ENCODE measurements at regions of chr1 and their contacts with region 1.

Region 1: DNA sequence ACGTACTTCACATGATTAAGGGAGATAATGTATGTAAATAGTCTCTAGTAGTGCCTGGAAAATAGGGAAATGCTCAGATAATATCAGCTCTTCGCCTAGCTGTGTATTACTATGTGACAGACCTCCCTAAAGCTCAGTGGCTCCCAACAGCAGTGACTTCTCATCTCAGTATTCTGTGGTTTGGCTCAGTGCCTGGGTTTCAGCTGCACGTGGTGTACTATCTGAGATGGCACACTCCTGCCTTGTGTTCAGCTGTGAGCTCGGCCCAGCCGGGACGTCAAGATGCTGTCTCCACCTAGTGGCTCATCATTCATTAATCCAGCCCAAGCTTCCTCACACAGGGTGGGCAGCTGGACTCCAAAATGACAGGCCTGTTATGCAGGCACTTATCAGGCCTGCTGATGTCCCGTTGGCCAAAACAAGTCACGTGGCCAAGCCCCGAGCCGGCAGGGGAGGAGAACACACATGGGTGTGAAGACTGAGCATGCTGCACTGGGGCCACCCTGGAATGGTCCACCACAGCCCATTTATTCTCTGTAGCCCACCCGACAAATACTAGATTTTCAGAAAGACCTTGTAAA is 17.8 kb downstream of the SLFNL1 start:
- DNase-seq: peak; percentile 97
- H3K4me3 ChIP-seq: no peak overlapping the region
- CTCF ChIP-seq: peak; percentile 70

Region 2: DNA sequence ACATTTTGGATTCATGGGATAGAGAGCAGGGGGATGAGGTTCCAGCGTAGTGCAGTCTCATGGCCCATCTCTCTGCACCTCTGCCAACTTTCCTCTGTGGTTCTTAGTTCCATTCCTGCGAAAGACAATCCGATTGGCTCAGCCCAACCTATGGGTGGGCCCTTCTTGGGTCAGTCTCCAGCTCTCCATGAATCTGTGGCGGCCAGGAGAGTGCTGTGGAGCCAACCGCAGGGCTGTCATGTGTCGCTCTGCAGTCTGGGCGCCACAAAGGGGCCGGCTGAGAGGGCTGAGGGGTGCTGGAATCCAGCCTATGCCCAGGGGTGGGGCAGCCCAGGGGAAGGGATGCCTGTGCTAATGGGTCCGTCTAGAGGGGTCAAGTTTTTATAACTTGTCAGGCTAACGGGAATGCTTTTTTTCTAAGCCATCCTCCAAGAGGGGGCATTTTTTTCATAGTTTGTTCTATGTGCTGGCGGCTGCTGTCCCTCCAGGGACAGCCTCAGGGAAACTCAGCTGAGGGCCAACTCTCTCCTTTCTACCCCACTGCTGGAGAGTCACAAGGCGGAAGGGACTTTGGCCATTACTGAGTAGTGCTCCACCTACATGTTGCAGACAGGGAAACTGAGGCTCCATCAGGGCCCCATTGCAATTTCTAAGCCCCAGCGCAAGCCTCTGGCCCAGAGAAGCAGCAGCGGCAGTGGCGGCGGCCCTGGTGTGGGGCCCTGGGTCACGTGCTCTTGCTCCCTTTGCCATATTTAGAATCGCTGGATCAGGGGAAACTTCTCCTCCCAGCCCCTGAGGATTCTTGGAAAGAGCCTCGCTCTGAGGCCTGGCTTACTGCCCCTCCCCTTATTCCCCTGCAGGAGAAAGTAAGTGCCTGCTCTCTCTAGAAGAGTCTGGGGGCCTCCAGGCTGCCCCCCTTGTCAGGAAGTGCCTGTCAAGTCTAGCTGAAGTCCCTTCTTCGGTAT is 196.7 kb before region 1 on chr1:
- CTCF ChIA-PET with region 1: no interaction called
- POLR2A ChIA-PET with region 1: no interaction called
- DNase-seq: no peak
- H3K4me3 ChIP-seq: no peak overlapping the region
- CTCF ChIP-seq: no peak

Region 3: DNA sequence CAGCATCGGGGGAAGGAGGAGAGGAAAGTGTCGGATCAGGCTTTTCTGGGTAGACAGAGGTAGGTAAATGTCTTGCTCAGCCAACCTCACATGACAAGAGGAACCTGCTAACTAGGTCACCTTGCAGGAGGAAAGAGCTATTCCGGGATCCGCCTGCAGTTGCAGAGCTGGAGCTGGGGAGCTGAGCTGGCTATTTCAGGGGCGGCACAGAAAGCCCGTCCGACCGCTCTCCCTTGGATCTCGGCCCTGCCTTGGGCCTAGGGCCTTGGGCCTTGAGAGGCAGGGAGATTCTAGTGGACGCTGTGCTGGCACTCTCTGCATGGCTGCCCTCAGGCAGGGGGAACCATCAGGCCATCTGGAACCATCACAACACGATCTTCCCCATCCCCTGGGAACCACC is 80.7 kb before region 1 on chr1:
- CTCF ChIA-PET with region 1: no interaction called
- POLR2A ChIA-PET with region 1: no interaction called
- DNase-seq: no peak
- H3K4me3 ChIP-seq: no peak overlapping the region
- CTCF ChIP-seq: no peak

Region 4: DNA sequence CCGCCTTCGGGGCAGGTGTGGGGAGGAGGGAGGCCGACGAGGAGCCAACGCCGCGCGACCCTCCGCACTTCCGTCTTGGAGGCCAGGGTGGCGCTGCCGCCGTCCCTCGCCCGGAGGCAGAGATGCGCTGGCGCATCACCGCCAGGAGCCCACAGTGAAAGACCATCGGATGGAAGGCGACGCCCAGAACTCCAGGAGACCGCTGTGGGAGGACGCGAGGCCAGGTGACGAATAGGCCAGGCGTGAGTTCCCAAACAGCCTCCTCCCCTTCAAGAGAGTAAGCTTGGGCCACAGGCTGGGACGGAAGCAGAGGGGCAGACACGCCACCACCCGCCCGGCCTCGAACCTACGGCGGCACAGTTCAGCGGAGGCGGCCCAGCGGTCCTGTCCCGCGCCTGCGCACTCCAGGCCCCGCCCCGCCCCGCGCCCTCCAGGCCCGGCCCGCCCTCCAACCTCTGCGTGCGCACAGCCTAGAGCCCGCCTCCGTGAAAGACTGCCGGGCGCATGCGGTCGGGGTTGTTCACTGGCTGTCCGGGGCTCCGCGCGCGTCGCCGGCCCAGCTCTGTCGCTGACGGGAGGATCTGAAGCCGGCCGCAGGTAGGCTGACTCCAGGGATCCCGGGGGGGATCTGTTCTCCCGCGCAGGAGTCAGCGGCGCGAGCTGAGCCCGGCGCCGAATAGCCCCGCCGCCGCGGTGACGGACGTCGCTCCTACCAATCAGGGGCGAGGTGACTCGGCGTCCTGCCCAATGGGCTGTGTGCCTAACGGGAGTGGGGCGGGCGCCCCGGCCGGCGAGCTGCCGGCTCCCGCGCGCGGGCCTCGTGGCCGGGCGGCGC is 24.3 kb before region 1 on chr1 and contains the start of gene CTPS1:
- CTCF ChIA-PET with region 1: interaction called, 13 read pairs
- POLR2A ChIA-PET with region 1: interaction called, 10 read pairs
- DNase-seq: peak; percentile 54
- H3K4me3 ChIP-seq: peak within 1 kb of the TSS; percentile 70
- CTCF ChIP-seq: peak; percentile 37

Region 5: GRCh38 chr1:40986956-40987355 is 16.8 kb before region 1 on chr1:
- CTCF ChIA-PET with region 1: interaction called, 26 read pairs
- POLR2A ChIA-PET with region 1: interaction called, 5 read pairs
- DNase-seq: no peak
- H3K4me3 ChIP-seq: no peak overlapping the region
- CTCF ChIP-seq: no peak

Region 6: GRCh38 chr1:41013796-41014195 is 10.1 kb after region 1 on chr1:
- CTCF ChIA-PET with region 1: interaction called, 21 read pairs
- POLR2A ChIA-PET with region 1: interaction called, 3 read pairs
- DNase-seq: no peak
- H3K4me3 ChIP-seq: no peak overlapping the region
- CTCF ChIP-seq: no peak

Region 7: DNA sequence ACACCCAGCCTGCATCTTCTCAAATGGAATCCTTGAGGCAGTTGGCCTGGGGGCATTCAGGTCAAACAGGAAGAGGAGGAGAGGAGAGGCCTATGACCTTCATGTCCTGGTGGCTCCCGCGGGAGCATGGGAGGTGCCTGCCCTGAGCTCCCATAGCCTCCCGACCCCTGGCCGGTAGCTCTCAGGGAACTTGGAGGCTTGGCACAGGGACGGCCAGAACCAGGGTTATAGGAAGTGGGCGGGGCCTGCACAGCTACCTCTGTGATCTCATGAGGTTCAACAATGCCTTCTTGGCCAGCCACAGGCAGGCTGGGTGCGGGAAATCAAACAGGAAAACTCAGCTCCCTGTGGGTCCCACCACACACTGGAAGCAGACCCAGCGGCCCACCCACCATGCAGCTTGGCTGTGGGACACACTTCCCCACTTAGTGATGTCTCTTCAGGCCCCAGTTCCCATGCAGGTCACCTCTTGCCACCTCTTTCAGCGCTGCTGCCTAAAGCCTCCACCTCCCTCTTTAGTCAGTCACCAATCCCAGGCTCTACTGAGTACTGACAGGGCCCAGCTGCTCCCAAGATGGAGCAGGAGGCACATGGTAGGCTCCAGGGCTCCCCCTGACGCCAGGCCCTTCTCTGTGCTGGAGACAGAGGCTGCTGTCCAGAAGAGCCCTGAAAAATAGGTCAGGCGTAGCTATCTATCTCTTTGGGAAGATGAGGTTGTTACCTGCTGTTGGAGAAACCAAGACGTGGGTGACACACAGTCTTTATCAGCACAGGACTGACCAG is 18.0 kb after region 1 on chr1 and contains the start of gene SLFNL1:
- CTCF ChIA-PET with region 1: interaction called, 18 read pairs
- POLR2A ChIA-PET with region 1: no interaction called
- DNase-seq: no peak
- H3K4me3 ChIP-seq: no peak within 1 kb of the TSS
- CTCF ChIP-seq: peak; percentile 24

Region 8: DNA sequence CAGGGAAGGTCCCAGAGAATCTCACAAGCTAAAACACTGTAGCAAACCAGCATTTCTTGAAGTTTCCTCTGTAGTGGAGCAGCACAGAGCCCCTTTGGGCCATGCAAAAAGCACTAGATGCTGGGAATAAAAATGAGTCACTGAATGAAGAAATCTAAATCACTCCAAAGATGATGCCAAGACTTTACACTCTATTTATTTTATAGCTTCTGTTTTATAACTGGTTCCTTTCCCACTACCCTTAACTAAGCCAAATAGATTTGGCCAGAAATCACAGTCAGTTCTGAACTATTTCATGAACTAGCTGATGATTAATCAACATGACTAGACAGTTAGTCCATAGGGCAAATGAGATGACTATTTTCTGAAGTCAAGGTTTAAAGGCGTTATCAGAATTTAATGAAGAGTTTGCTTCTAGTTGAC is 148.9 kb after region 1 on chr1:
- CTCF ChIA-PET with region 1: no interaction called
- POLR2A ChIA-PET with region 1: no interaction called
- DNase-seq: peak; percentile 84
- H3K4me3 ChIP-seq: no peak overlapping the region
- CTCF ChIP-seq: no peak

Measured in AG04449 (cell line).